Mammary epithelial cell (primary cell): ENCODE measurements at regions of chr10 and their contacts with region 1.

Region 1: GRCh38 chr10:69237528-69238159 is 17.5 kb downstream of the HKDC1 start:
- DNase-seq: peak; percentile 61
- H3K4me3 ChIP-seq: no peak overlapping the region
- H3K27ac ChIP-seq: no peak overlapping the region
- H3K4me1 ChIP-seq: peaks cover 13% of the 10 kb centered on the region
- H3K27me3 ChIP-seq: no peaks in the 10 kb centered on the region
- CTCF ChIP-seq: peak; percentile 90 to 92

Region 2: DNA sequence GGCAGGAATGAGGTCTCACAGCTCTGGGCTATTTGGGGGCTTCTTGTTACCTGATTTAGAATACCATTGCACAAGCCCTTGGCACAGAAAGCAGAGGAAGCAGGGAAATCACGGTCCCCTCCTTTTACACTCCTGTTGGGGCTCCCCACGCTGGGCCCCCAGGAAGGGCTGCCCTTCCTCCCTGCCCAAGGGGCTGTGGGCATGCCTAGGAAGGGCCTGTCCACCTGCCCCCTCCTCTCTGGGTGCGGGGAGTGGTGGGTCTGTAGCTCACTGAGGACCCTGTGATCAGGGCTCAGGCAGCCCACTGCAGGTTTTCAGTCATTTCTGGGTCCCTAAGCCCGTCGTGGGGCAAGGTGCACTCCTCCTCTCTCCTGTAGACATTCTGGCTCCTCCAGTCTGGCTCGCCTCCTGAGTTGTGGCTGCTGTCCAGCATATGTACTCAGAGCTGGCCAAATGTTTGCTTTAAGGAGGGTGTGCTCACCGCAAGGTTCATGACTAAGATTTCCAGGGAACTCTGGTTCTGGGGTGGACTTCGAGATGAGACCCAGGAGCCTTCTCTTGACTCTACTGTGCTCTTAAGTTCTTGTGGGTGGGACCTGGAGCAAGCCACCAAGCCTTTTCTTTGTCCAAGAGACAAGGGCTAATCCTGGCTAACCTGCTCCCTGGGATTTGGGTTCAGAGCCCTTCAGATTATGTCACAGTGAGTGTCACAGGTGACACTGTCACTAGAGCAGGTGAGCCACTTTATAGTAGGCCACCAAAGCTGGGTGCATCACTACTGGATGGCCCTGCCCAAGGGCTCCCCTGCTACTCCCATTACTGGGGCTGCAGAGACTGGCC is 123.1 kb after region 1 on chr10:
- CTCF ChIA-PET with region 1: no interaction called
- dilution Hi-C with region 1: no loop called
- in situ Hi-C with region 1: no loop called
- intact Hi-C with region 1: no loop called
- DNase-seq: peak; percentile 88
- H3K4me3 ChIP-seq: no peak overlapping the region
- H3K27ac ChIP-seq: peak overlapping the region; percentile 10
- H3K4me1 ChIP-seq: peaks cover 43% of the 10 kb centered on the region
- H3K27me3 ChIP-seq: no peaks in the 10 kb centered on the region
- CTCF ChIP-seq: no peak

Region 3: GRCh38 chr10:69392481-69393000 is 154.9 kb after region 1 on chr10:
- CTCF ChIA-PET with region 1: no interaction called
- dilution Hi-C with region 1: no loop called
- in situ Hi-C with region 1: loop called in 1 of 2 experiments (anchors 5 kb)
- intact Hi-C with region 1: loop called (anchors 1 kb)
- DNase-seq: peak; percentile 66
- H3K4me3 ChIP-seq: no peak overlapping the region
- H3K27ac ChIP-seq: no peak overlapping the region
- H3K4me1 ChIP-seq: peaks cover 6% of the 10 kb centered on the region
- H3K27me3 ChIP-seq: no peaks in the 10 kb centered on the region
- CTCF ChIP-seq: peak; percentile 92 to 99

Region 4: GRCh38 chr10:69506834-69507721 is 269.4 kb after region 1 on chr10:
- CTCF ChIA-PET with region 1: no interaction called
- dilution Hi-C with region 1: no loop called
- in situ Hi-C with region 1: loop called in 1 of 2 experiments (anchors 25 kb)
- intact Hi-C with region 1: loop called (anchors 1 kb)
- DNase-seq: no peak
- H3K4me3 ChIP-seq: no peak overlapping the region
- H3K27ac ChIP-seq: no peak overlapping the region
- H3K4me1 ChIP-seq: no peaks in the 10 kb centered on the region
- H3K27me3 ChIP-seq: peaks cover 6% of the 10 kb centered on the region
- CTCF ChIP-seq: no peak

Region 5: DNA sequence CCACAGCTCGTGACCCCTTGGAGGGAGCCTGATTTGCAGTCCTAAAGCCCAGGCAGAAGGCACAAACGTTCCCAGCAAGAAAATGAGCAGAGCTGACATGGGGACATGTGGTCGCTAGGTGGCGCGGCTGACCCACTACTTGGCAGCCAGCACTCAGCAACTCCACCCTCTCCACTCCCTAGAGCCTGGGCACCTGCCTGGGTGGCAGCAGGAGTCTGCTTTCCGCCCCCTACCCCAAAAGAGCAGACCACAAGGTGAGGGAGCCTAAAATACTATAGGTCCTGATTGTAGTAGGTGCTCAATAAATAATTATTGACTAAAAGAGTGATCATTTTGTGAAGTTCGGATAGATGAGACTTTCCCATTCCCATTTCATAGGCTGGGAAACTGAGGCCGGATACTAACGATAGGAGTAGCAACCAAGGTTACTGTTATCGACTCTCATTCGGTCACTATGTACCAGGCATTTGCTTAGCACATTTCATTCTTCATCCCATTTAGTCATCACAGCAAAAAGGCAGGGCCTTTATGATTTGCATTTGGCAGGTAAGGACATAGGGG is 278.1 kb after region 1 on chr10:
- CTCF ChIA-PET with region 1: no interaction called
- dilution Hi-C with region 1: no loop called
- in situ Hi-C with region 1: loop called in 1 of 2 experiments (anchors 25 kb)
- intact Hi-C with region 1: no loop called
- DNase-seq: peak; percentile 53
- H3K4me3 ChIP-seq: no peak overlapping the region
- H3K27ac ChIP-seq: no peak overlapping the region
- H3K4me1 ChIP-seq: no peaks in the 10 kb centered on the region
- H3K27me3 ChIP-seq: peaks cover 2% of the 10 kb centered on the region
- CTCF ChIP-seq: peak; percentile 94 to 96

Region 6: GRCh38 chr10:69541463-69541862 is 303.8 kb after region 1 on chr10:
- CTCF ChIA-PET with region 1: no interaction called
- dilution Hi-C with region 1: no loop called
- in situ Hi-C with region 1: no loop called
- intact Hi-C with region 1: no loop called
- DNase-seq: no peak
- H3K4me3 ChIP-seq: no peak overlapping the region
- H3K27ac ChIP-seq: no peak overlapping the region
- H3K4me1 ChIP-seq: no peaks in the 10 kb centered on the region
- H3K27me3 ChIP-seq: no peaks in the 10 kb centered on the region
- CTCF ChIP-seq: no peak